ENCODE measurements at regions of chr11 and their contacts with region 1.

Region 1: DNA sequence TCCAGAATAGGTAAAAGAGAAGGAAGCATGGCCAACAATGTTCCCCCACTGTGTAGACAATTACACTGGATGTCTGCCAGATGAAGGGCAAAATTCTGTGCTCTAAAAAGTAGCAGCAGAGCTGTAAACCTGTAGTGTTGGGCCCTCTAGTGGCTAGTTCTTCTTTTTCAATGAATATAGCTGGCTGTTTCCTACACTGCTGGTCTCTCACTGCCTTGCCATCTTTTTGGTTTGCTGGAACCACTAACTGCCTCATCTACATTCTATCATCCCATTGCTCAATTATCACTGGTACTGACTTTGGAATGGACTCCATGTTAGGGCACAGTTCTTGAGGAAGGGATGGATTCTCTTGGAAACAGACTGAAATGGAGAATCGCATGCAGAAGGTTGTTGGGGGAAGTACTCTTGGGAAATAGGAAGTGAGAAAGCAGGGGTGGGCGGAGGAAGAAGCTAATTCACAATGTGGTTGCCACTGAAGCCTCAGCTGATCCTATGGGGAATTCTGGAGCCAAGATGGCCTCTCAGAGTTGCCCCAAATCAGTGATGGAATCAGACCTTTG is 17.9 kb downstream of the KCNE3 start:
- DNase-seq: peak; percentile 93
- ATAC-seq: peak; percentile 80
- H3K4me3 ChIP-seq: no peak overlapping the region
- H3K27ac ChIP-seq: no peak overlapping the region
- H3K4me1 ChIP-seq: no peaks in the 10 kb centered on the region
- H3K27me3 ChIP-seq: no peaks in the 10 kb centered on the region
- CTCF ChIP-seq: peak; percentile 94

Region 2: DNA sequence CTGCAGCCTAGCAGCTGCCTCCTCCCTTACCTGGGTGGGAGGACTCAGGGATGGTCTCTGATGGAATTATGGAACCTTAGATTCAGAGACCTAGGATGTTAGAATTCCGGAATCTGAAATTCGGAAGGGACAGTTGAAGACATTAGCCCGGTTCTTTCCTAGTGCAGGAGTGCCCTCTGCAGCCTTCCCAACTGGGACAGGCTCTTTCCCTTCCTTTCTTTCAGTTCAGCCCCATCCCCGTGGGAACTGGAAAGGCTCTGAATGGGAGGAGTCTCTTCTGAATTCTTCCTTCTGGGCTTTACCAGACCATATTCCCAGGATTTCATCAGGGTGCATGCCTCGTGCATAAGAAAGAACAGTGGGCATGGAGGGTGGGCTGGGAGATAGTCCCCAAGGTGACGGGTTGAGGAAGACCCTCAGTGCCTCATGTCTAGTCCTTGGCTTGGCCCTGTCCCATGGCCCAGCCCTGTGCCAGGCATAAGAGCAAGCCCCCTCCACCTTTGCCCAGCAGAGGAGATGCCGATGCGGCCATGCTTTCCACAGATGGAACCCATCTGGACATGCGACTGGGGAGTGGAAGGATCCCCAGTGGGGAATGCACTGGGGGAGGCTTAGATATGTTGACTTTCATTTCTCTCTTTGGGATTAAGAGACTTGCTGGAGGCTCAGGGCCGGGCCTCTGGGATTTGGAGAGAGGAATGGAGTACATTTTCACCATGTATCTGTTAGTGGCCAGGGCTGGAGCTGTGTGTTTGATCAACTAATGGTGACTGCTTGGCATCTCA is 484.2 kb before region 1 on chr11:
- CTCF ChIA-PET with region 1: no interaction called
- POLR2A ChIA-PET with region 1: no interaction called
- intact Hi-C with region 1: loop called (anchors 10 kb)
- DNase-seq: peak; percentile 58
- ATAC-seq: peak; percentile 65
- H3K4me3 ChIP-seq: peak overlapping the region; percentile 60
- H3K27ac ChIP-seq: no peak overlapping the region
- H3K4me1 ChIP-seq: peaks cover 7% of the 10 kb centered on the region
- H3K27me3 ChIP-seq: no peaks in the 10 kb centered on the region
- CTCF ChIP-seq: peak; percentile 42; the same call in 1 of the 2 replicates

Region 3: DNA sequence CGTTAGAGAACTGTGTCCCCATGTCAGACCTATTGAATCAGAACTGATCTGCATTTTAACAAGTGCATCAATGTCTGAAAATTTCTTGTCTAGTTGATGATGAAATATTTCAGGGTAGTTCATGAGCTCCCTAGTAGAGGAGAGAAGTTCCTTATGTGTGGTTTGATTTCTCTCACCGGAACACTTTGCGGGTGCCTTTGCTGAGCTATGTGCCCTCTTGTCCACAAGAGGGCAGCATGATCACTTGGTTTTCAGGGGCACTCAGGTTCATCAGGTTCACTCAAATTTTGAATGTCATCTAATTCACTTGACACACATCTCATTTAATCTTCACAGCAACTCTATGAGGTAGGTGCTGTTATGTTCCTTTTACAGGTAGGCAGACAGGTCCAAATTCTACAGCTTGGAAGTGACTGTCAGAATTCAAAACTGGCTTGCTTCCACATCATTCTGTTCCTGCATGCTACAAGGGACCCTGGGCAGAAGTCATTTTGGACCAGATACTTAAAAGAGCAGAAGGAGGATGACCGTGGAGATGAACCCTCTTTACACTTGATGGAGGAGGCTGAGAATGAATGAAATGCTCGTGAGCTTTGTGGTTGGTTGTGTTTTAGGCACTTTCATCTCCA is 193.6 kb before region 1 on chr11:
- CTCF ChIA-PET with region 1: interaction called, 25 read pairs
- POLR2A ChIA-PET with region 1: no interaction called
- intact Hi-C with region 1: loop called (anchors 1 kb)
- DNase-seq: peak; percentile 87
- ATAC-seq: peak; percentile 66
- H3K4me3 ChIP-seq: no peak overlapping the region
- H3K27ac ChIP-seq: no peak overlapping the region
- H3K4me1 ChIP-seq: peaks cover 15% of the 10 kb centered on the region
- H3K27me3 ChIP-seq: no peaks in the 10 kb centered on the region
- CTCF ChIP-seq: peak; percentile 99

Region 4: GRCh38 chr11:74434528-74434927 is 14.9 kb before region 1 on chr11:
- CTCF ChIA-PET with region 1: interaction called, 10 read pairs
- POLR2A ChIA-PET with region 1: no interaction called
- intact Hi-C with region 1: no loop called
- DNase-seq: no peak
- ATAC-seq: no peak
- H3K4me3 ChIP-seq: no peak overlapping the region
- H3K27ac ChIP-seq: no peak overlapping the region
- H3K4me1 ChIP-seq: no peaks in the 10 kb centered on the region
- H3K27me3 ChIP-seq: no peaks in the 10 kb centered on the region
- CTCF ChIP-seq: no peak

Region 5: DNA sequence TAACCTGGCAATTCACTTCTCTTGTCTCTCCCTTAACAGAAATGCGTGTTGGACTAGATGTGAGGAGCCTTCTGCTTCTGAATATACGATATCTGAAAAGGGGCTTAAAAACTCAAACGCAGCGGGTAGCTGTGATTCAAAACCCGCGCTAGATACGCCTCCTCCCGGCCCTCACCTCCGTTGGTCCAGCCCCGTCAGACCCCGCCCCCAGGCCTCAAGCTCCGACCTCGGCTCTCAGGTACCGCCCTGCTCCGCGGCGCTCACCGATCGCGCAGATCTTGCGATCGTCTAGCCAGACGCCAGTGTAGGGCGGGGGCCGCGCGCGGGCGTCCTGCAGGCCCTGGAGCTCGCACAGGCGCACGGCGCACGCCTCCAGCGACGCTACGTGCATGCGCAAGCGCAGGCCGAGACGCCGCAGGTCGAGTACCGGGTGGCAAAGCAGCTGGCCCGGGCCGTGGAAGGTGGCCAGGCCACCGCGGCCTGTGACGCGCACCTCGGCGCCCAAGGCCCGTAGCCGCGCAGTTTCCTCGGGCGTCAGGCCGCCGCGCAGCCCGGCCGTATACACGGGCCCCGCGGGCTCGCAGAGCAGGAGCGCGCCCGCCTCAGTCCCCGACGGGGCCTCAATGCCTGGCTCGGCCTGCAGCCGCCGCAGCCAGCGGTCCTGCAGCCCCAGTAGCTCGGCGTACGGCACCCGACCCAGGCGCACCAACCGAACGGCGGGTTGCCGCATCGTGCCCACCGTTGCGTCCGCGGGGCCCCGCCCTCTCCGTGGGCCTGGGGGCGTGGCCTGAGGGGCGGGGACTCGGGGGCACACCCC is 43.7 kb after region 1 on chr11 and contains the start of gene LIPT2:
- CTCF ChIA-PET with region 1: interaction called, 16 read pairs
- POLR2A ChIA-PET with region 1: no interaction called
- intact Hi-C with region 1: no loop called
- DNase-seq: peak; percentile 99
- ATAC-seq: peak; percentile 98
- H3K4me3 ChIP-seq: peak within 1 kb of the TSS; percentile 92
- H3K27ac ChIP-seq: peak within 1 kb of the TSS; percentile 92
- H3K4me1 ChIP-seq: peaks cover 17% of the 10 kb centered on the region
- H3K27me3 ChIP-seq: no peaks in the 10 kb centered on the region
- CTCF ChIP-seq: no peak
- total RNA-seq, gene LIPT2: 9.4 and 11.3 TPM in 2 replicates

Region 6: GRCh38 chr11:74570266-74571061 is 121.0 kb after region 1 on chr11:
- CTCF ChIA-PET with region 1: interaction called, 37 read pairs
- POLR2A ChIA-PET with region 1: no interaction called
- intact Hi-C with region 1: loop called (anchors 1 kb)
- DNase-seq: peak; percentile 85
- ATAC-seq: peak; percentile 86
- H3K4me3 ChIP-seq: no peak overlapping the region
- H3K27ac ChIP-seq: no peak overlapping the region
- H3K4me1 ChIP-seq: peaks cover 5% of the 10 kb centered on the region; the same call in 1 of the 2 replicates
- H3K27me3 ChIP-seq: no peaks in the 10 kb centered on the region
- CTCF ChIP-seq: peak; percentile 97

Measured in PC-3 (cell line).